ENCODE measurements at regions of chr17 and their contacts with region 1.

Region 1: GRCh38 chr17:37373530-37374159 is 2.1 kb upstream of the C17orf78 start:
- DNase-seq: peak; percentile 67

Region 2: GRCh38 chr17:37322826-37323561 is 50.7 kb before region 1 on chr17:
- CTCF ChIA-PET with region 1: no interaction called
- POLR2A ChIA-PET with region 1: no interaction called
- DNase-seq: no peak

Region 3: GRCh38 chr17:37358830-37359681 is 14.6 kb before region 1 on chr17:
- CTCF ChIA-PET with region 1: interaction called, 15 read pairs
- POLR2A ChIA-PET with region 1: interaction called, 7 read pairs
- DNase-seq: peak; percentile 84

Region 4: DNA sequence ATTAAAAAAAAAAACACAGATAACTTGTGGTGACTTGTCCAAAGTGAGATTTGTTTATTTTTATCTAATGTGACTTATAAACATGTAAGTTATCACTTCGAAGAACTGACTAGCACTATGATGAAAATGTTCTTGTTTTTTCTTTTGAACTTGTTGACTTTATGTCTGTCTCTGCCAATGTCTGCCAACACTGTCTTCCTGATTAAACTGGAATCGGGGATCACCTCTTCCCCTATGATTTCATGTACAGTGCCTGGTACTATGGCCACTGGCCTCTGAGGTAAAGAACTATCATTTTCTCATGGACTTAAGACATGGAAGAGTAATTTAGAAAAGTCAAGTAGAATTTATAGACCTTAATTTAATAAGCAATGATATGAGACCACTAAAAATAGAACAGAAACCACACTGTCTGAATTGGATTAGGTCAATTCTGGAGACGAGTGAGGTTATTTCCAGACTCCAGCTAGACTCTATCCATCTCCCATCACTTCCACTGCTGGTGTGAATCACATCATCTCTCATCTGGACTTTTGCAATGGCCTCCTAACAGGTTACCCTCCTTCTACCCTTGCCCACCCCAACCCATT is 11.0 kb after region 1 on chr17:
- CTCF ChIA-PET with region 1: interaction called, 34 read pairs
- POLR2A ChIA-PET with region 1: interaction called, 4 read pairs
- DNase-seq: no peak

Region 5: GRCh38 chr17:37392024-37392590 is 18.5 kb after region 1 on chr17:
- CTCF ChIA-PET with region 1: interaction called, 34 read pairs
- POLR2A ChIA-PET with region 1: no interaction called
- DNase-seq: no peak

Region 6: DNA sequence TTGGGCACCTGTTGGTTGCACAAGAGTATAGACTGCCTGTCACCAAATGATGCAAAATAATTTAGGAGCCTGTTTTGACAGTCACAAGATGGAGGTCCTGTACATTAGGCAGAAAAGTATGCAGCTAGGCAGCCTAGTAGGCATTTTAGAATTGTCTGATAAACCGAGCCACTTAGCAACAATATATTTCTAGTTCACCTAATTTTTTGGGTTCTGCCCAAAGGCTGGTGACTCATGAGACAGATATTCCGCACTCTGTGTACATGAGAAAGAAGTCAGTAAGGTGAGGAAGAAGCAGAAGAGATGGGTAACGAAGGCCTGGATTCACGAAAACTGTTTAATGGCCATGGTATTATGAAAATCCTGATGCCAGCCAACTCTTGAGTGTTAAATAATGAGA is 25.8 kb after region 1 on chr17:
- CTCF ChIA-PET with region 1: interaction called, 34 read pairs
- POLR2A ChIA-PET with region 1: no interaction called
- DNase-seq: no peak

Region 7: DNA sequence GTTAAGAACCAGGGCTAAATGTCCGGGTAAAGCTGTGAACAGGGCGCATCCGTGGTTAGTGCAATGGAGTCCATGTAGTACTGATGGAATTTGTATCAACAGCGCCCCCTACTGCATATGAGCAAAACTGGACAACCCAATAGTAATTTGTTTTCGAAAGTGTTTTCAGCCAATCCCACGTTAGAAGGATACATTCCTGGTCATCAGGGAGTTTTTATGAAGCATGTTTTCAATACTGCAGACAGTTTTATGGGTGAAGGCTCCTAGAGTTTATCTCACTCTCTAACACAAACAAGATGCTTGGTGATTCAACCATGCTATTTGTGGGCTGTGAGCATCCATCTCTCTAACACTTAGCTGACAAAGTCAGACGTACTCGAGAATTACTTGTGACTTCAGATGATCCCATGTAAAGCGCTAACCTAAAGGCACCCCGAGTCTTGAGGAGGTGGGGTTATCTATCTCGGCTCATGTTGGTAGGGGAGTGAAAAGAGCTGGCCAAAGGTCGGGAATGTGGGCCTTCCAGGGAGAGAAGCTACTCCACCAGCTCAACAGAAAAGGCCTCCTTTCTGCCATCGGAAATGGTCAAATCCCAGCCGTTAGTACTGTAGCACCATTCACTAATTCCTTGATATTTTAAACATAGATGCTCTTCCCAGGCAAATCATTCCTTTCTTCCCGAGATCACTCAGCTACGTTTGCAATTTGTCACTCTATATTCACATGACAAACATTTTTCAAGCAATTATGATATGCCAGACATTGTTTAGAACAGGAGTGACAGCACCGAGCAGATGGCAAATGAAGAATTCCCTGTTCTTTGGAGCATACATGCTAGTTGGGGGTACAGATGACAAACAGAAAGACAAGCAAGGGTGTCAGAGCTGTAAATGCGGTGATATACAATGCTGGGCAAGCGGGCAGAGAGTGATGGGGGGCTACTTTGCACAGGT is 418.1 kb after region 1 on chr17:
- CTCF ChIA-PET with region 1: no interaction called
- POLR2A ChIA-PET with region 1: no interaction called
- DNase-seq: peak; percentile 27